ENCODE measurements at regions of chr7 and their contacts with region 1.

Region 1: GRCh38 chr7:97064967-97065587 is 40.4 kb upstream of the DLX5 start:
- DNase-seq: peak; percentile 58
- CTCF ChIP-seq: peak; percentile 69

Region 2: GRCh38 chr7:97075928-97076327 is 10.9 kb after region 1 on chr7:
- CTCF ChIA-PET with region 1: interaction called, 35 read pairs
- POLR2A ChIA-PET with region 1: no interaction called
- DNase-seq: no peak
- CTCF ChIP-seq: no peak